ENCODE measurements at regions of chr7 and their contacts with region 1.

Region 1: GRCh38 chr7:12584930-12585329 is 14.4 kb downstream of the SCIN start:
- DNase-seq: peak in 1 of 2 donors; percentile 41
- H3K4me3 ChIP-seq: no peak overlapping the region
- CTCF ChIP-seq: no peak
- POLR2A ChIP-seq: no peak

Region 2: GRCh38 chr7:11394438-11394837 is 1190.5 kb before region 1 on chr7:
- intact Hi-C with region 1: no loop called
- DNase-seq: no peak
- H3K4me3 ChIP-seq: no peak overlapping the region
- CTCF ChIP-seq: no peak
- POLR2A ChIP-seq: no peak

Region 3: DNA sequence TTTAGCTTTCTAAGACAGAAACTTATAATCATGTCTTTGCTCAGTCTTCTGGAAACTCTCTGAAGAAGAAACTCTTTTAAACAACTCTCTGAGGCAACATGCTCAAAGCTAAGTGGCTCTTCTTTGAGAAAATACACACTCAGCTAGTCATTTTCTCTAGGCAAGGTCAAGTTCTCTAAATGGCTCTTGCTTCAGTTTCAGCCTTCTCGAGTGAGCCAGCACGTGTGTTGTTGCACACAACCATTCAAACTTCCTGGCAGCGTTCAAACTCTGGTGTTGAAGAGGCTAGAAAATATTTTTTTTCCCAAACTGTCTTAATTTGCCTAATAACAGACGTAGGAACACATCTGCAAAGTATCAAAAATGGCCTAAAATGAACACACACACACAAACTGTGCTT is 882.0 kb before region 1 on chr7:
- intact Hi-C with region 1: loop called (anchors 5 kb)
- DNase-seq: no peak
- H3K4me3 ChIP-seq: no peak overlapping the region
- CTCF ChIP-seq: no peak
- POLR2A ChIP-seq: no peak

Region 4: DNA sequence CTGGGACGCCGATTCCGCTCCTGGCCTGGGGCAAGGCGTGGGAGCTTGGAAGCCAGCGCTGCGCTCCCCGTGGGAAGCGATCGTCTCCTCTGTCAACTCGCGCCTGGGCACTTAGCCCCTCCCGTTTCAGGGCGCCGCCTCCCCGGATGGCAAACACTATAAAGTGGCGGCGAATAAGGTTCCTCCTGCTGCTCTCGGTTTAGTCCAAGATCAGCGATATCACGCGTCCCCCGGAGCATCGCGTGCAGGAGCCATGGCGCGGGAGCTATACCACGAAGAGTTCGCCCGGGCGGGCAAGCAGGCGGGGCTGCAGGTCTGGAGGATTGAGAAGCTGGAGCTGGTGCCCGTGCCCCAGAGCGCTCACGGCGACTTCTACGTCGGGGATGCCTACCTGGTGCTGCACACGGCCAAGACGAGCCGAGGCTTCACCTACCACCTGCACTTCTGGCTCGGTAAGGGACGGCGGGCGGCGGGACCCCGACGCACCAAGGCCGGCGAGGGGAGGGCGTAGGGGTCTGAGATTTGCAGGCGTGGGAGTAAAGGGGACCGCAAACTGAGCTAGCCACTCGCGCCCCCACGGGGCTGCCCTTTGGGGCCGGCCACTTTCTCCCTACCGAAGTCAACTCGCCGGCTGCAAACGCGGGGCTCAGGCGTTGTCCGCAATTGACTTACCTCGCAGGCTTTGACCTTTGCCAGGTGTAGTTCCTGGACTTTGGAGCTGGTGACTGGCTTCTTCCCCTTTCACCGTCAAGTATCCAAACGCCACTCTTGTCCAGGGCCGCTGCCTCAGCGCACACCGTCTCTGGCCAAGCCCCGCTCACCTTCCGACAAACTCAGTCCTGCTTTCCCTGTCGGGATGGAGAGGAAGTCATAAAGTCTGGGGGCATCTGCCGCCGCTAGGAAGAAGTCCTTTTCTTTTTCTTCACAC is 14.1 kb before region 1 on chr7 and contains the start of gene SCIN:
- intact Hi-C with region 1: no loop called
- DNase-seq: peak; percentile 33 to 83
- H3K4me3 ChIP-seq: peak within 1 kb of the TSS; percentile 13
- CTCF ChIP-seq: no peak
- POLR2A ChIP-seq: no peak
- total RNA-seq, gene SCIN: 3.1 to 6.6 (median 5.8) TPM